ENCODE measurements at regions of chr9 and their contacts with region 1.

Region 1: DNA sequence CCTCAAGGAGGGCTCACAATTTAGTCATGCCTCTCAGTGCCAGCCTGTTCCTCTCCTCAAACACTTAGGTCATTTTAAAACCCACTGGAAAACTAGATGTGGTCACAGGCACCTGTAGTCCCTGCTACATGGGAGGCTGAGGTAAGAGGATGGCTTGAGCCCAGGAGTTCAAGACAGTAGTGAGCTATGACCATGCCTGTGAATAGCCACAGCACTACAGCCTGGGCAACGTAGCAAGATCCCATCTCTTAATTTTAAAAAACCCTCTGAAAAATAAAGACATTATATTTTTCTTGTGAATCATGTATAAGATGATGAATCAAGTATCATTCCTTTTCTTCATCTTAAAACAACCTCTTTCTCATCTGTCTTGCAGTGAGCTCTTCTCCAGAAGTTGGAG is 45.8 kb downstream of the KLF4 start:
- DNase-seq: no peak
- H3K4me3 Mint-ChIP-seq: no peak overlapping the region
- H3K27ac Mint-ChIP-seq: no peak overlapping the region
- H3K4me1 Mint-ChIP-seq: no peaks in the 10 kb centered on the region
- H3K27me3 Mint-ChIP-seq: peaks cover 2% of the 10 kb centered on the region

Region 2: GRCh38 chr9:105500108-105500766 is 1943.5 kb before region 1 on chr9:
- CTCF ChIA-PET with region 1: no interaction called
- POLR2A ChIA-PET with region 1: no interaction called
- intact Hi-C with region 1: no loop called
- DNase-seq: no peak
- H3K4me3 Mint-ChIP-seq: no peak overlapping the region
- H3K27ac Mint-ChIP-seq: no peak overlapping the region
- H3K4me1 Mint-ChIP-seq: no peaks in the 10 kb centered on the region
- H3K27me3 Mint-ChIP-seq: no peaks in the 10 kb centered on the region

Region 3: DNA sequence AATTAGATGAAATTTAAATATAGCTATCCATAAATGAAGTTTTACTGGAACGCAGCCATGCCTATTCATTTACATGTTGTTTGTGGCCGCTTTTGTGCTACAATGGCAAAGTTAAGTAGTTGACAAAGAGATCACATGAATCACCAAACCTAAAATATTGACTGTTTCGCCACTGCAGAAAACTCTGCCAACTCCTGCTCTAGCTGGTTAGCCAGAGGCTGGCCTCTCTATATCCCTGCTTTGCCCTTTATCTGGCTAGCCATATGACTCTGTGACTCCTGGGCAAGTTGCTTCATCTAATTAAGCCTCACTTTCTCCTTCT is 46.1 kb before region 1 on chr9:
- CTCF ChIA-PET with region 1: no interaction called
- POLR2A ChIA-PET with region 1: no interaction called
- intact Hi-C with region 1: no loop called
- DNase-seq: no peak
- H3K4me3 Mint-ChIP-seq: no peak overlapping the region
- H3K27ac Mint-ChIP-seq: no peak overlapping the region
- H3K4me1 Mint-ChIP-seq: no peaks in the 10 kb centered on the region
- H3K27me3 Mint-ChIP-seq: peaks cover 7% of the 10 kb centered on the region

Region 4: DNA sequence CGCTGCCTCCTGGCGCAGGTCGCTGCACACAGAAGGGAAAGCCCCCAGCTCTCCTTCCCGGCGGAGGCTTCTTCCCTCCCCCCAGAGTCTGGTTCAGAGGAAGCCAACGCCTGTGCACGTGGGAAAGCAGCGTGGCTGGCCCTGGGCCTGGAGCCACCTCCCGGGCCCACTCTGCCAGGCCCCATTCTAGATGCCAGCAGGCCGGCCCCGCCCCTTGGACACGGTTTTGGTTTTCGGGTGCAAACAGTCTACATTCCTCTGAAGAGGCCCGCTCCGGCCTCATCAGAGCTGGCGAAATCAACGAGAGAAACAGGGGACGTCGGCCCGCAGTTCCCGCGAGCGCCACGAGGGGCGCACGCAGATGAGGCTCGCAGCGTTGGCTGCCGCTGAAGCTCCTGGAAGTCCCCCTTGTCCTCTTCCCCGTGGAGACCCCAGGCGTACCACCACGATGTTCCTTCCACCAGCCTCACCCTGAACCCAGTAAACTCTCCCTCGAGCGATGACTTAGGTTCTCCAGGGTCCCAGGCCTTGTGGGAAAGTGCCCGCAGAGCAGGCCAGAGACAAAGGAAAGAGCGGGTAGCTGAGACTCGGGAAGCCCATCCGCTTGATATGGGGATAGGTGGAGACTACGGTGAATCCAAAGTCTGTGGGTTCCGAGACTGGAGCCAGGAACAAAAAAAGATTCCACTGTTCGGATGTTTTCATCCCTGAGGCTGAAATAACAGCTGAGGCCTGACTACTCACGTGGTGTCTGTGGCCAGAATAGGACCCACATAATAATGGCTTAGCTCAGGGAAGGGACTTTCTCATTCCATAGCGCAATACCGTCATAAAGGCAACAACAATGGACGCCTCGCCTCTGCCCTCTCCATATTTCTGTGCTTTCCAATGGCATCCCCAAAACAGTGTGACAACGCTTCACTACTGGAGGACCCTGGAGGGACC is 18.4 kb before region 1 on chr9:
- CTCF ChIA-PET with region 1: interaction called, 13 read pairs
- POLR2A ChIA-PET with region 1: no interaction called
- intact Hi-C with region 1: no loop called
- DNase-seq: peak; percentile 64
- H3K4me3 Mint-ChIP-seq: no peak overlapping the region
- H3K27ac Mint-ChIP-seq: no peak overlapping the region
- H3K4me1 Mint-ChIP-seq: peaks cover 5% of the 10 kb centered on the region
- H3K27me3 Mint-ChIP-seq: peaks cover 5% of the 10 kb centered on the region

Region 5: GRCh38 chr9:107496976-107497375 is 53.2 kb after region 1 on chr9:
- CTCF ChIA-PET with region 1: no interaction called
- POLR2A ChIA-PET with region 1: no interaction called
- intact Hi-C with region 1: no loop called
- DNase-seq: no peak
- H3K4me3 Mint-ChIP-seq: no peak overlapping the region
- H3K27ac Mint-ChIP-seq: no peak overlapping the region
- H3K4me1 Mint-ChIP-seq: no peaks in the 10 kb centered on the region
- H3K27me3 Mint-ChIP-seq: peaks cover 21% of the 10 kb centered on the region

Measured in activated CD4-positive, alpha-beta memory T cell treated with anti-CD3 and anti-CD28 coated beads for 36 hours (primary cell).